Endothelial cell of umbilical vein (primary cell): ENCODE measurements at regions of chr10 and their contacts with region 1.

Region 1: GRCh38 chr10:86747796-86748581 is 8.4 kb upstream of the BMPR1A start:
- DNase-seq: peak; percentile 92
- H3K4me3 ChIP-seq: no peak overlapping the region
- H3K27ac ChIP-seq: no peak overlapping the region
- H3K4me1 ChIP-seq: peaks cover 12% of the 10 kb centered on the region
- H3K27me3 ChIP-seq: peaks cover 47 to 67% of the 10 kb centered on the region in 2 experiments
- CTCF ChIP-seq: no peak
- POLR2A ChIP-seq: peak; percentile 46

Region 2: DNA sequence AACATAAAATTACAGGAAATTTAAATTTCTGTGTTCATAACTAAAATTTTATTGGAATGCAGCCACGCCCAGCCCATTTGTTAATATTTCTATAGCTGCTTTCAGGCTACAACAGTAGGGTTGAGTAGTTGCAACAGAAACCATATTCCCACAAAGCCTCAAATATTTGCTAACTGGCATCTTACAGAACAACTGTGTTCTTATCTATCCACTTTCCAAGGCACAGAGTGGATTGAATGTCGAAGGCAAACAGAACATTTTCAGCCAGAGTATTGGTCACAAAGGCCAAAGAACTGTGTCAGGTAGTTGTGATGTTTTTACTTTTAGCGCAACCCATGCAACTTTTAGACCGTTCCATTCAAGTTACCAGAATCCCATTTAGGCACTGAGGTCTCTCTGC is 144.7 kb before region 1 on chr10:
- CTCF ChIA-PET with region 1: no interaction called
- POLR2A ChIA-PET with region 1: no interaction called
- dilution Hi-C with region 1: no loop called
- intact Hi-C with region 1: no loop called
- DNase-seq: no peak
- H3K4me3 ChIP-seq: no peak overlapping the region
- H3K27ac ChIP-seq: no peak overlapping the region
- H3K4me1 ChIP-seq: no peaks in the 10 kb centered on the region
- H3K27me3 ChIP-seq: peaks cover 0 to 2% of the 10 kb centered on the region in 2 experiments
- CTCF ChIP-seq: no peak
- POLR2A ChIP-seq: no peak

Region 3: DNA sequence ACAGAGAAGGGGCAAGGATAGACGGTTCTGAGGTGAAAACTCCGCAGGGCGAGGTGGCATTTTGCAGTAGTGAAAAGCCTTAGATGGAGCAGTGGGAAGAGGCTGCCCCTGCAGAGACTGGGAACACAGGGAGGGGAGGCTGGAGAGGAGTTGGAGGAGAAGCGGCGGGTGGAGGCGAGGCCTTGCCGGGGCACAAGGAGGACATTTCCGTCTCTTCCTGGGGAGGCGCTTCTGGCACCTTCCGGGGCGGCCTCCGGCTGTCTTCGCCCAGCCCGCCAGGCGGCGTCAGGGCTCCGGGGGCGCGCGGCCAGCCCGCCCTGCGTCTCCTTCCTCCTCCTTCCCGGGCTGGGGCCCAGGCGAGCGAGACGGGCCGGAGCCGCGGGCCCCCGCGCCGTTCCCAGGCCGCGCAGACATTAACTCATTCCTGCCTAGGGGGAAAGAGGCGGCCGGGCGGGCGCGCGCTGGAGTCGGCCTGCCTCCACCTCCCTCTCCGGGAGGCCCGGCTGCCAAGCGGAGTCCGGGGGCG is 36.9 kb before region 1 on chr10:
- CTCF ChIA-PET with region 1: no interaction called
- POLR2A ChIA-PET with region 1: no interaction called
- dilution Hi-C with region 1: no loop called
- intact Hi-C with region 1: loop called (anchors 2 kb)
- DNase-seq: peak; percentile 28
- H3K4me3 ChIP-seq: peak overlapping the region in 2 of 3 experiments; percentile 9 to 34
- H3K27ac ChIP-seq: no peak overlapping the region
- H3K4me1 ChIP-seq: no peaks in the 10 kb centered on the region
- H3K27me3 ChIP-seq: peaks cover 41 to 59% of the 10 kb centered on the region in 2 experiments
- CTCF ChIP-seq: peak; percentile 43 to 69
- POLR2A ChIP-seq: no peak

Region 4: GRCh38 chr10:86727470-86727869 is 20.5 kb before region 1 on chr10:
- CTCF ChIA-PET with region 1: interaction called, 8 read pairs
- POLR2A ChIA-PET with region 1: no interaction called
- dilution Hi-C with region 1: no loop called
- intact Hi-C with region 1: loop called (anchors 2 kb)
- DNase-seq: no peak
- H3K4me3 ChIP-seq: no peak overlapping the region
- H3K27ac ChIP-seq: no peak overlapping the region
- H3K4me1 ChIP-seq: no peaks in the 10 kb centered on the region
- H3K27me3 ChIP-seq: peaks cover 68 to 73% of the 10 kb centered on the region in 2 experiments
- CTCF ChIP-seq: no peak
- POLR2A ChIP-seq: no peak

Region 5: GRCh38 chr10:86868353-86868752 is 120.4 kb after region 1 on chr10:
- CTCF ChIA-PET with region 1: no interaction called
- POLR2A ChIA-PET with region 1: no interaction called
- dilution Hi-C with region 1: no loop called
- intact Hi-C with region 1: loop called (anchors 2 kb)
- DNase-seq: peak; percentile 94
- H3K4me3 ChIP-seq: peak overlapping the region in 1 of 3 experiments; percentile 19
- H3K27ac ChIP-seq: peak overlapping the region; percentile 36
- H3K4me1 ChIP-seq: peaks cover 18% of the 10 kb centered on the region
- H3K27me3 ChIP-seq: peaks cover 17 to 18% of the 10 kb centered on the region in 2 experiments
- CTCF ChIP-seq: no peak
- POLR2A ChIP-seq: no peak